ENCODE measurements at regions of chr19 and their contacts with region 1.

Region 1: GRCh38 chr19:39846176-39846677 is at the start of gene FBL:
- DNase-seq: peak; percentile 82
- ATAC-seq: peak; percentile 94
- H3K4me3 ChIP-seq: peak within 1 kb of the TSS; percentile 70
- H3K27ac ChIP-seq: peak within 1 kb of the TSS; percentile 81
- H3K4me1 ChIP-seq: peaks cover 15% of the 10 kb centered on the region
- H3K27me3 ChIP-seq: no peaks in the 10 kb centered on the region
- CTCF ChIP-seq: no peak
- EP300 ChIP-seq: no peak
- POLR2A ChIP-seq: peak; percentile 93
- RAD21 ChIP-seq: no peak
- polyA plus RNA-seq, gene FBL: 156 to 460 TPM

Region 2: GRCh38 chr19:39546599-39546998 is 299.6 kb before region 1 on chr19:
- CTCF ChIA-PET with region 1: interaction called, 60 read pairs
- POLR2A ChIA-PET with region 1: no interaction called
- RAD21 ChIA-PET with region 1: interaction called, 18 read pairs
- SMC1A ChIA-PET with region 1: interaction called, 16 read pairs
- in situ Hi-C with region 1: loop called (anchors 5 kb)
- intact Hi-C with region 1: loop called (anchors 2 kb)
- DNase-seq: no peak
- ATAC-seq: no peak
- H3K4me3 ChIP-seq: no peak overlapping the region
- H3K27ac ChIP-seq: no peak overlapping the region
- H3K4me1 ChIP-seq: peaks cover 1% of the 10 kb centered on the region
- H3K27me3 ChIP-seq: no peaks in the 10 kb centered on the region; a peak in 1 of 4 replicates
- CTCF ChIP-seq: no peak
- EP300 ChIP-seq: no peak
- POLR2A ChIP-seq: no peak
- RAD21 ChIP-seq: no peak

Region 3: DNA sequence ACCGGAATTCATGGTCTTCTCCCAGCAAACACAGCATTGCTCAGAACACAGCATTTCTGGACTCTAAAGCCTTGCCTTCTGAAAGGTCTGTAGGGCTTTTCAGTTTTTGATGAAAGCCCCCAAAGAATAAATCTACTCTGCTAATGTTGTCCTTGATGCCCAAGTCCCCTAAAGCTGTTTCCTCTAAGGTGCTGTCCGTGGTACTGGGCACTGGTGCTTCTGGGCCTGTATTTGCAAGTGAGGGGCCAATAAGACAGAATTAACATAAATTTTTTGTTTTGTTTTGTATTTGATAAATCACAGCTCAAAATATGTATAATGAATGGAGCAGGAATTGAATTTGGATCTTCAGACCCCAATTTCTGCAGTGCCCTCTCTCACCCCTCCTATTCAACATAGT is 256.0 kb before region 1 on chr19:
- CTCF ChIA-PET with region 1: no interaction called
- POLR2A ChIA-PET with region 1: no interaction called
- RAD21 ChIA-PET with region 1: no interaction called
- SMC1A ChIA-PET with region 1: no interaction called
- in situ Hi-C with region 1: no loop called
- intact Hi-C with region 1: no loop called
- DNase-seq: no peak
- ATAC-seq: no peak
- H3K4me3 ChIP-seq: no peak overlapping the region
- H3K27ac ChIP-seq: no peak overlapping the region
- H3K4me1 ChIP-seq: no peaks in the 10 kb centered on the region
- H3K27me3 ChIP-seq: no peaks in the 10 kb centered on the region; a peak in 1 of 4 replicates
- CTCF ChIP-seq: no peak
- EP300 ChIP-seq: no peak
- POLR2A ChIP-seq: no peak
- RAD21 ChIP-seq: no peak

Region 4: DNA sequence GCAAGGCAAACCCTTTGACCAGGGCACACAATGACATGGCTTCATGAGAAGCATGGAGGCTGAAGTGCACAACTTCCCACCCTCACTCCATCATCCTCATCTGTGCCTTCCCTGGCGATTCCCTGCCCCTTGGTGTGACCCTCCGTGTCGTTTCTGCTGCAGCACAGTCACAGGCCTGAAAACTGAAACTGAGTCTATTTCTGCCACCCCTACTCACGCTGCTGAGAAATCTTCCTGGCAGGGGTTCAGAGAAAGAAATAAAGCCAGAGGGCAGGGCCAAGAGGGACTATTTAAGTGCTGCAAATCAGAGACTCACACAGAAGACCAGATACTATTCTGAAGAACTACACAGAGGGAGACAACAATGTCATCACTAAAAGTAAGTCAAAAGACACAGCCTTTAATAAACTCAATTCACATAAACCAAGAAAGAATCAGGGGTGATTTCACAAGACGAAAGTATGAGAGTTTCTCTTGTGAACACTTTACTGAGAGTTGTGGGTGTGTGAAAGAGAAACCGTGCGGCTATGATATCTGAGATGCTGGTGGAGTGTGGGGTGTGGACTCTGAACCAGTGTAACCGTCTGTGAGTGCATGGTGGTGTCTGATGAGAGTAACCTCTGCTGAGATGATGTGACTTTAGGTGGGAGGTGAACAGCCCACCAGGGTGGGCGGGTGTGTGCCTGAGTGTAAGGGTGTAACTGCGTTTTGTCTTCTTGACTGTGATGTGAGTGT is 167.0 kb before region 1 on chr19:
- CTCF ChIA-PET with region 1: interaction called, 335 read pairs
- POLR2A ChIA-PET with region 1: interaction called, 25 read pairs
- RAD21 ChIA-PET with region 1: interaction called, 234 read pairs
- SMC1A ChIA-PET with region 1: interaction called, 266 read pairs
- in situ Hi-C with region 1: no loop called
- intact Hi-C with region 1: loop called (anchors 1 kb)
- DNase-seq: peak; percentile 86
- ATAC-seq: peak; percentile 86
- H3K4me3 ChIP-seq: peak overlapping the region; percentile 86
- H3K27ac ChIP-seq: peak overlapping the region; percentile 98
- H3K4me1 ChIP-seq: peaks cover 61% of the 10 kb centered on the region
- H3K27me3 ChIP-seq: no peaks in the 10 kb centered on the region
- CTCF ChIP-seq: no peak
- EP300 ChIP-seq: peak; percentile 6 to 81
- POLR2A ChIP-seq: 0 out of 2 replicates have a peak, but pooled peaks have one; percentile 6
- RAD21 ChIP-seq: 0 out of 2 replicates have a peak, but pooled peaks have one; percentile 18

Region 5: DNA sequence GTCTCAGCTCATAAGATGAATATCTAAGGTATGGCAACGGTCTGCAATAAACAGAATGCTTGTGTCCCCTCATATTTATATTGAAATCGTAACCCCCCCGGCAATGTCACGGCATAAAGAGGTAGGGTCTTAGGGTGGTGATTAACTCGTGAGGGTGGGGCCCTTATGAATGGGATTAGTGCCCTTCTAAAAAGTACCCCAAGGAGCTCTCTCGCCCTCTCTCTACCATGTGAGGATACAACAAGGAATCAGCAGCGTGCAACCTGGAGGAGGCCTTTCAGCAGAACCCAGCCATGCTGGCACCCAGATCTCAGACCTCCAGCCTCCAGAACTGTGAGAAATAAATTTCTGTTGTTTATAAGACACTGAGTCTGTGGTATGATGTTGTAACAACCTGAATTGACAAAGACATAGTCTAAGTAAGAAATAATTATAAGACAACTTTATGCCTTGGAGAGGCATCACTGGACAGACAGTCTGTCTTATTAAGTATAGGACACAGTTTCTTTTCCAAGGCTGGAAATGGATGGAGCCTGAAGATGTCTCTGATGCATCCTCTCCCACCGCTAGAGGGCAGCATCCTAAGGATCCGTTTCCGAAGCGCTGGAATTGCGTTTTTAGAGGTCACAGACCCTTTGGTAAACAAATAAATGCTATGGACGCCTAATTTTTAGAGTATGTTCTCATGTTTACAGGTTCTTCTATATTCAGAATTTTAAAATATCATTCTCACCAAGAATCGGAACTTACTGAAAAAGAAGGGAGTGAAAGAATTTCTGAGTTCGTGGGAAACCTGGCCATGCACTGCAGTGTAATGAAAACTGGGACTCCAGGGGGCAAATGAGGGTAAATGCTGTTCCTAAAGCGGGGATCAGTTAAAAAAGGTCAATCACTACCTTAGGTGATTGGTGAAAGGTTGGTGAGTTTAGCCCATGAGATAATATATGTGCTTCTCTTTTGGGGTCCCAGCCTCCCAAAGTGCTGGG is 80.8 kb before region 1 on chr19:
- CTCF ChIA-PET with region 1: interaction called, 82 read pairs
- POLR2A ChIA-PET with region 1: no interaction called
- RAD21 ChIA-PET with region 1: interaction called, 12 read pairs
- SMC1A ChIA-PET with region 1: interaction called, 25 read pairs
- in situ Hi-C with region 1: no loop called
- intact Hi-C with region 1: loop called (anchors 2 kb)
- DNase-seq: no peak
- ATAC-seq: no peak
- H3K4me3 ChIP-seq: no peak overlapping the region
- H3K27ac ChIP-seq: no peak overlapping the region
- H3K4me1 ChIP-seq: peaks cover 5% of the 10 kb centered on the region
- H3K27me3 ChIP-seq: no peaks in the 10 kb centered on the region
- CTCF ChIP-seq: peak; percentile 29 to 79 (median 56); a peak in 5 of 6 replicates
- EP300 ChIP-seq: no peak
- POLR2A ChIP-seq: no peak
- RAD21 ChIP-seq: 0 out of 2 replicates have a peak, but pooled peaks have one; percentile 22

Region 6: GRCh38 chr19:39792999-39793546 is 53.2 kb before region 1 on chr19:
- CTCF ChIA-PET with region 1: interaction called, 466 read pairs
- POLR2A ChIA-PET with region 1: interaction called, 30 read pairs
- RAD21 ChIA-PET with region 1: interaction called, 271 read pairs
- SMC1A ChIA-PET with region 1: interaction called, 309 read pairs
- in situ Hi-C with region 1: loop called (anchors 5 kb)
- intact Hi-C with region 1: loop called (anchors 1 kb)
- DNase-seq: peak; percentile 40
- ATAC-seq: peak; percentile 97
- H3K4me3 ChIP-seq: peak overlapping the region; percentile 66
- H3K27ac ChIP-seq: peak overlapping the region; percentile 40; the same call in 1 of the 2 replicates
- H3K4me1 ChIP-seq: peaks cover 16% of the 10 kb centered on the region
- H3K27me3 ChIP-seq: no peaks in the 10 kb centered on the region
- CTCF ChIP-seq: peak; percentile 91 to 96 (median 94)
- EP300 ChIP-seq: no peak
- POLR2A ChIP-seq: no peak
- RAD21 ChIP-seq: peak; percentile 96

Region 7: GRCh38 chr19:39813264-39813993 is 32.8 kb before region 1 on chr19:
- CTCF ChIA-PET with region 1: interaction called, 83 read pairs
- POLR2A ChIA-PET with region 1: interaction called, 7 read pairs
- RAD21 ChIA-PET with region 1: interaction called, 17 read pairs
- SMC1A ChIA-PET with region 1: interaction called, 22 read pairs
- in situ Hi-C with region 1: no loop called
- intact Hi-C with region 1: no loop called
- DNase-seq: no peak
- ATAC-seq: no peak
- H3K4me3 ChIP-seq: no peak overlapping the region
- H3K27ac ChIP-seq: no peak overlapping the region
- H3K4me1 ChIP-seq: peaks cover 21% of the 10 kb centered on the region
- H3K27me3 ChIP-seq: no peaks in the 10 kb centered on the region
- CTCF ChIP-seq: no peak
- EP300 ChIP-seq: no peak
- POLR2A ChIP-seq: no peak
- RAD21 ChIP-seq: no peak

Region 8: GRCh38 chr19:39824143-39825092 is 21.8 kb before region 1 on chr19:
- CTCF ChIA-PET with region 1: interaction called, 83 read pairs
- POLR2A ChIA-PET with region 1: interaction called, 4 read pairs
- RAD21 ChIA-PET with region 1: interaction called, 17 read pairs
- SMC1A ChIA-PET with region 1: interaction called, 16 read pairs
- in situ Hi-C with region 1: no loop called
- intact Hi-C with region 1: no loop called
- DNase-seq: peak; percentile 67
- ATAC-seq: peak; percentile 99
- H3K4me3 ChIP-seq: peak overlapping the region; percentile 81
- H3K27ac ChIP-seq: peak overlapping the region; percentile 53
- H3K4me1 ChIP-seq: peaks cover 17% of the 10 kb centered on the region
- H3K27me3 ChIP-seq: no peaks in the 10 kb centered on the region
- CTCF ChIP-seq: no peak
- EP300 ChIP-seq: no peak
- POLR2A ChIP-seq: peak; percentile 77
- RAD21 ChIP-seq: no peak

Region 9: GRCh38 chr19:39916851-39917396 is 70.7 kb after region 1 on chr19:
- CTCF ChIA-PET with region 1: no interaction called
- POLR2A ChIA-PET with region 1: no interaction called
- RAD21 ChIA-PET with region 1: no interaction called
- SMC1A ChIA-PET with region 1: no interaction called
- in situ Hi-C with region 1: no loop called
- intact Hi-C with region 1: no loop called
- DNase-seq: no peak
- ATAC-seq: no peak
- H3K4me3 ChIP-seq: no peak overlapping the region
- H3K27ac ChIP-seq: no peak overlapping the region
- H3K4me1 ChIP-seq: no peaks in the 10 kb centered on the region
- H3K27me3 ChIP-seq: no peaks in the 10 kb centered on the region
- CTCF ChIP-seq: no peak
- EP300 ChIP-seq: no peak
- POLR2A ChIP-seq: no peak
- RAD21 ChIP-seq: no peak

Measured in GM12878 (cell line).